GM23248 (cell line): ENCODE measurements at regions of chr11 and their contacts with region 1.

Region 1: DNA sequence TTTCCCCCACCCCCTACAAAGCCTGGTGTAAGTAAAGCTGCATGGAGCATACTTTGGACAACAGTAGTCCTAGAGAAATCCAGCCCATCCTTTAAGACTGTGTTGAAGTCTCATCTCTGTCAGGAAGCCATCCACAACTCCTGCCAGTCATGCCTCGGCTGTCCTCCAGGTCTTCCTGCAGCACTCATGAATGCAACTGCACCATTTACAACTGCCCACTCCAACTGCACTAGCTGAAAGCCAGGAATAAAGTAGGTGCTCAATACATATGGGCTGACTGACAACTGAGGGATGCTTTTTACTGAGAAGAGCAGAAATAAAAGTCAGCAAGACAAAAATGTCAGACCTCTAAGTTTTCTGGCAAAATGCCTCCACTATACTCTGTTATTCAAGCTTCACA is 27.4 kb downstream of the IL18BP start:
- DNase-seq: peak; percentile 44
- H3K4me3 ChIP-seq: no peak overlapping the region
- H3K27ac ChIP-seq: peak overlapping the region; percentile 95
- H3K4me1 ChIP-seq: peaks cover 14% of the 10 kb centered on the region
- H3K27me3 ChIP-seq: no peaks in the 10 kb centered on the region

Region 2: GRCh38 chr11:71165771-71166170 is 860.3 kb before region 1 on chr11:
- in situ Hi-C with region 1: no loop called
- DNase-seq: no peak
- H3K4me3 ChIP-seq: no peak overlapping the region
- H3K27ac ChIP-seq: no peak overlapping the region
- H3K4me1 ChIP-seq: no peaks in the 10 kb centered on the region
- H3K27me3 ChIP-seq: no peaks in the 10 kb centered on the region

Region 3: DNA sequence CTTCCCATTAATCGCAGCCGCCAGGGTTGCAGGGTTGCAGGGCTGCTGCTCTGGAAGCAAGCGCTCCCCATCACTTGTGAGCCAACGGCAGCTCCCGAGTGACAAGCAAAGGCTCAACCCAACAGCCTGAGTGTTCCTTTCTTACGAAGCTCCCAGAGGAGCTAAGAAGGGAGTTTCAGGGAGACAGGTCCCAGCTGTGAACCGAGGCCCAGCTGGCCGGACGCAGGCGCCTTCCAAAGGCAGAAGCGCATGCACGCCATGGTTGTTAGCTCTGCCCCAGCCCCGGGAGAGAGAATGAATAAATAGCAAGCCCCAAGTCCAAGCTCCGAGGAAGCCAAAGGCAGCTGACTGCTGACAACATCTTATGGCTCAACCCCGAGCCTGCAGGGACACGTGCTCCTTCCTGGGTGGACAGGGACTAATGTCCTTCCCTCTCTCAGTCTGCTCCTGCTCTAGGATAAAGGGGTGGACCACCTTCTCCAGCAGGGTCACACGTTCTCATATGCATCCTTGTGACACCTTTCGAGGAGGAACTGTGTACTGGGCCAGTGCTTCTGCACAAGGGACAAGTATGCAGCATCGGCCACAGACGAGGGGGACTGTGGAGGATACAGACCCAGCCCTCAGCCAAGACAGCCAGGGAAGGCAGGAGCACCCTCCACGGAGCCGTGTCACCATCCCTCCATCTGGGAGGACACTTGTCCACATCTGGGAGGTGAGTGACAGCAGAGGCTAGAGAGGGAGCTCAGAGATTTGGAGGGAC is 803.6 kb before region 1 on chr11:
- in situ Hi-C with region 1: no loop called
- DNase-seq: no peak
- H3K4me3 ChIP-seq: no peak overlapping the region
- H3K27ac ChIP-seq: no peak overlapping the region
- H3K4me1 ChIP-seq: no peaks in the 10 kb centered on the region
- H3K27me3 ChIP-seq: no peaks in the 10 kb centered on the region

Region 4: DNA sequence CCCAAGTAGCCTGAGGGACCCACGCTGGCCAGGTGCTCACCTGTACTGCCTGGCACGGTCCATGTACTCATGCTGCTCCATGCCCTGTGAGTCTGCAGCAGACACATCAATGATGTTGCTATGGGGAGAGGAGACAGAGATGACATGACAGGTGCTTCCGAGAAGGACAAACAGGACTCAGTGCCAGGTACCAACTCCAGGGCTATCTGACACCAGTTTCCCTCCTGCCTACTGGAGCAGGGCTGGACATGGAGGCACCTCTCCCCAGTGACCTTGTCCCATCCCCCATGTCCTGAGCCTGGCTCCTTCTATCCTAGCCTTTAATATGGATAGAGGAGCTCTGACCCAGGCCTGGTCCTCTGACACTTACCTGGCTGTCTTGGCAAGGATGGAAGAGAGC is 72.7 kb after region 1 on chr11:
- in situ Hi-C with region 1: loop called (anchors 5 kb)
- DNase-seq: no peak
- H3K4me3 ChIP-seq: no peak overlapping the region
- H3K27ac ChIP-seq: no peak overlapping the region
- H3K4me1 ChIP-seq: peaks cover 20% of the 10 kb centered on the region
- H3K27me3 ChIP-seq: no peaks in the 10 kb centered on the region

Region 5: DNA sequence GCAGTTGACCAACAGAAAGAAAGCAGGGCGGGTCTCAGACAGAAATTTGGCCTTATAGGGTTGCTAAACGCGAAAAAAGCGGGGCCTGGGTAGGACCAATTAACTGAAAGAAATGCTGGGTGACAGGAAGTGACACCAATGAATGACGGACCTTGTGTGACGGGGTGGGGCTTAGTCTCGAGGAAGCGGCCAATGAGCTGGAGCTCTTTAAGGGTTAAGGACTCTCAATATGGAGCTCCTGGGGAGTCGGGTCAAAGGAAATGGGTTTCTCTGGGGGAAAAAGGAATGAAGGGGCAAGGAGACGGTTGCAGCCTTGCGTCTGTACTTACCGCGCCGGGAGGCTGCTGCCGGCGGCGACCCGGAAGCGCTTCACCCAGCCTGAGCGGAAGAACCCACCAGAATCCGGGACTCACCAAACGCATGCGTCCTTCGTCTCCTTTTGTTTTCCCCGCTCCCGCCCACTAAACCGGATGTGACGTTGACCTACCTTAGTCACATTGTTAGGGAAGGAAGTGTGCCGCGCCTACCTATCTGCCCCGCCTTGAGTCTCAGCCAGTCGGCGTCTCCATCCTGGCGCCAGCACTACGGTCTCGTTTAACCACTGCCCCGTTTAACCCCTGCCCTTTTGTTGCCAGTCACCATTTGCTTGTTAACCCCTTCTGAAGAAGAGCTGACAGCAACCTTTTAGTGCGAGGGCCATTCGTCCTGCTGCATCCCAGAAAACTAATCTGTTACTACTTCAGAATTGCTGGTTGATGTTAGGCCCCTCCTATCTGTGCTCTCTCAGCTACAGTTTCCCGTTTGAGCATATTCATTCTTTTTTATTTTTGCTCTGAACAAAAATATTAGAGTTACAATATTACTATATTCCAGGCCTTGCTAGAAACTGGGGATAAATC is 86.5 kb after region 1 on chr11 and contains the start of gene ANAPC15:
- in situ Hi-C with region 1: no loop called
- DNase-seq: peak; percentile 100
- H3K4me3 ChIP-seq: peak within 1 kb of the TSS; percentile 75
- H3K27ac ChIP-seq: peak within 1 kb of the TSS; percentile 100
- H3K4me1 ChIP-seq: peaks cover 31% of the 10 kb centered on the region
- H3K27me3 ChIP-seq: no peaks in the 10 kb centered on the region
- total RNA-seq, gene ANAPC15: 38.7 TPM in 2 replicates

Region 6: GRCh38 chr11:72179804-72180396 is 153.8 kb after region 1 on chr11:
- in situ Hi-C with region 1: loop called (anchors 10 kb)
- DNase-seq: peak; percentile 41
- H3K4me3 ChIP-seq: no peak overlapping the region
- H3K27ac ChIP-seq: no peak overlapping the region
- H3K4me1 ChIP-seq: peaks cover 5% of the 10 kb centered on the region; the same call in 1 of the 2 replicates
- H3K27me3 ChIP-seq: no peaks in the 10 kb centered on the region

Region 7: GRCh38 chr11:72425053-72425980 is 399.2 kb after region 1 on chr11:
- in situ Hi-C with region 1: loop called (anchors 10 kb)
- DNase-seq: no peak
- H3K4me3 ChIP-seq: no peak overlapping the region
- H3K27ac ChIP-seq: no peak overlapping the region
- H3K4me1 ChIP-seq: no peaks in the 10 kb centered on the region
- H3K27me3 ChIP-seq: no peaks in the 10 kb centered on the region